Common myeloid progenitor, CD34-positive (primary cell): ENCODE measurements at regions of chr7 and their contacts with region 1.

Region 1: GRCh38 chr7:130010689-130011412 is 40.3 kb downstream of the ZC3HC1 start:
- DNase-seq: peak; percentile 93 to 98 (median 94)
- H3K4me3 ChIP-seq: no peak overlapping the region
- H3K27ac ChIP-seq: no peak overlapping the region
- H3K4me1 ChIP-seq: peaks cover 0 to 17% (median 5%) of the 10 kb centered on the region in 4 experiments
- H3K27me3 ChIP-seq: no peaks in the 10 kb centered on the region

Region 2: GRCh38 chr7:129684777-129685176 is 326.1 kb before region 1 on chr7:
- CTCF ChIA-PET with region 1: no interaction called
- POLR2A ChIA-PET with region 1: no interaction called
- DNase-seq: no peak
- H3K4me3 ChIP-seq: no peak overlapping the region
- H3K27ac ChIP-seq: no peak overlapping the region
- H3K4me1 ChIP-seq: no peaks in the 10 kb centered on the region
- H3K27me3 ChIP-seq: no peaks in the 10 kb centered on the region

Region 3: DNA sequence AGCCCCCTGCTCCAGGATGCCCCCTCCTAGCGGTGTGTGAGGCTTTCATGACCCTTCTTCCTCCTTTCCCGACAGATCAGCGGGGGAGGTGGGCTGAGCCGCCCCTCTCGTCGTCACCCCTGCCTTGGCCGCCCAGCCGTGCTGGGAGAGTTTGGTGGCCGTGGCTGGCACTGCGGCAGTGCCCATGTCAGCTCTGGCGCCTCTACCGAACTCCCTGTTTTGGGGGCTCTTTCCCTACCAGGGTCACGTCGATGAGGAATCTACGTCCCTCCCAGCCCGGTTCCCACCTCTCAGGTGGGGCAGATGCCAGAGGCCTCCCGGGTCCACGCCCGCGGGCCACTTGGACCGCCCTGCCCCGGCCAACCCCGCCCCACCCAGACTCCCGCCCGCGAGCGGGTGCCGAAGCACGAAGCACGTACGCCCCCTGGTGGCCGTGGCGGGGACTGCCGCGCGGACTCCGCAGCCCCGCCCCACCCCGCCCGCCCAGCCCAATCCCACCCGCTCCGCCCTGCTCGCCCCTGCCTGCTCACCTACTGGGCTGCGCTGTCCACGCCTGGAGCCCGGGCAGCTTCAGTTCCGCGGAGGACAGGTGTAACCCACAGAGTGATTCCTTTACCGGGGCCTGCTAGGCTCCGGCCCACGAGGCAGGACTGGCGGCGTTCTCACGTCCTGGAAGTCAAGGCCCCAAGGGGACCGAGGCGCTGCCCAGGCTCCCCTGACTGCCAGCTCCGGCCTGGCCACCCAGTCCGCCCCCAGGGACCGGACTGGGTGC is 185.2 kb before region 1 on chr7:
- CTCF ChIA-PET with region 1: interaction called, 69 read pairs
- POLR2A ChIA-PET with region 1: no interaction called
- DNase-seq: peak; percentile 66 to 81 (median 79)
- H3K4me3 ChIP-seq: peak overlapping the region; percentile 53 to 84 (median 75)
- H3K27ac ChIP-seq: no peak overlapping the region
- H3K4me1 ChIP-seq: peaks cover 0 to 20% (median 16%) of the 10 kb centered on the region in 4 experiments
- H3K27me3 ChIP-seq: peaks cover 0 to 3% (median 0%) of the 10 kb centered on the region in 5 experiments

Region 4: DNA sequence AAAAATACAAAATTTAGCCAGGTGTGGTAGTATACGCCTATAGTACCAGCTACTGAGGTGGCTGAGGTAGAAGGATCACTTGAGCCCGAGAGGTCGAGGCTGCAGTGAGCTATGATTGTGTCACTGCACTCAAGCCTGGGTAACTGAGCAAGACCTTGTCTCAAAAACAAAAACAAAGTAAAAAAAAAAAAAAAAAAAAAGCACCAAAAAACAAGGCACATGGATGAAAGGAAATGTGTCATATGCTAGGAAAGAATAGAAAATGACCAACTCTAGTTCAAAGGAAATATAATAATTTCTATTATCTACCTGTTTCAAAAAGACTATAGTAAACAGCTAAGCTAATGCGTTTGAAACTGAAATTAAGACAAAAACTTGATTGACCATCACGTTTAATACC is 91.9 kb before region 1 on chr7:
- CTCF ChIA-PET with region 1: interaction called, 10 read pairs
- POLR2A ChIA-PET with region 1: interaction called, 3 read pairs
- DNase-seq: no peak
- H3K4me3 ChIP-seq: no peak overlapping the region
- H3K27ac ChIP-seq: no peak overlapping the region
- H3K4me1 ChIP-seq: peaks cover 0 to 9% (median 0%) of the 10 kb centered on the region in 4 experiments
- H3K27me3 ChIP-seq: no peaks in the 10 kb centered on the region

Region 5: GRCh38 chr7:130021105-130021834 is 10.4 kb after region 1 on chr7:
- CTCF ChIA-PET with region 1: interaction called, 33 read pairs
- POLR2A ChIA-PET with region 1: no interaction called
- DNase-seq: no peak
- H3K4me3 ChIP-seq: no peak overlapping the region
- H3K27ac ChIP-seq: no peak overlapping the region
- H3K4me1 ChIP-seq: peaks cover 2 to 12% (median 9%) of the 10 kb centered on the region in 4 experiments
- H3K27me3 ChIP-seq: no peaks in the 10 kb centered on the region